ENCODE measurements at regions of chr12 and their contacts with region 1.

Region 1: DNA sequence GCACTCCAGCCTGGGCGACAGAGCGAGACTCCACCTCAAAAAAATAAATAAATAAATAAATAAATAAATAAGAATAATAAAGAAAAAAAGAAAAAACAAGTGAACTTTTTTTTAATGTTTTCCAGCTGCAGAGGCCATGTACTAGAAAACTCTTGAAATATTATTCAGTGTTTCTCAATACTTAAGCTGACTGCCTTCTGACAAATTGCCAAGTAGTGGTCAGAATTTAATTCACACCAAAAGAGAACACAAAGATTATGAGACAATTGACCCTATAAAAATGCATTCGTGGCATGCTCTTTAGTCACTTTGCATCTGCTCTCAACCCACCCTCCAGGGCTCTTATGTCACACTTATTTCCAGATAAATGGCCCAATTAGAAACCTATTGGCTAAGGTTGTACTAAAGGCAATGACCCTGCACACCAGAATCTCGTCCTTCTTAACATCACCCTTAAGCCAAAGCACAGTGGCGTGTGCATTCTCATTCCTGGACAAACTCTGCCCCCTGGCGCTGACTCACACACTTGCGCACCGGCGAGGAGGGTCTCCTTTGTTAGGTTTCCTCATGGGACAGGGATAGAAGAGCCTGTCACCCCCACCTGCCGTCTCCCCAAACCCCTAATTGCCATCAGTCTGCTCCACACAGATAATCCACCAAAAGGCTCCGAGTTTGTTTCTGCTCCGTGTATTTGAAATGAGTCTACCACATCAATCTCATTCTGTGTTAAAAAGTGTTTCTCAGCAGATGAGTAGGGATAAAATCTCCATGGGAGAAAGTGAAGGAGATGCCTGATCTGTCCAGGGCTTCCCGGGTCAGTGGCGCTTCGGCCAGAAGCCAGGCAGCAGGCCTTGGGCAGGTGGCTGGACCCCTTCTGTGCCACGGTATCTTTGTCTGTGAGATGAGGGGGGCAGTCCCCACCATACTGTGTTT is 73.1 kb upstream of the CEP83 start:
- DNase-seq: peak; percentile 82
- ATAC-seq: peak; percentile 75

Region 2: DNA sequence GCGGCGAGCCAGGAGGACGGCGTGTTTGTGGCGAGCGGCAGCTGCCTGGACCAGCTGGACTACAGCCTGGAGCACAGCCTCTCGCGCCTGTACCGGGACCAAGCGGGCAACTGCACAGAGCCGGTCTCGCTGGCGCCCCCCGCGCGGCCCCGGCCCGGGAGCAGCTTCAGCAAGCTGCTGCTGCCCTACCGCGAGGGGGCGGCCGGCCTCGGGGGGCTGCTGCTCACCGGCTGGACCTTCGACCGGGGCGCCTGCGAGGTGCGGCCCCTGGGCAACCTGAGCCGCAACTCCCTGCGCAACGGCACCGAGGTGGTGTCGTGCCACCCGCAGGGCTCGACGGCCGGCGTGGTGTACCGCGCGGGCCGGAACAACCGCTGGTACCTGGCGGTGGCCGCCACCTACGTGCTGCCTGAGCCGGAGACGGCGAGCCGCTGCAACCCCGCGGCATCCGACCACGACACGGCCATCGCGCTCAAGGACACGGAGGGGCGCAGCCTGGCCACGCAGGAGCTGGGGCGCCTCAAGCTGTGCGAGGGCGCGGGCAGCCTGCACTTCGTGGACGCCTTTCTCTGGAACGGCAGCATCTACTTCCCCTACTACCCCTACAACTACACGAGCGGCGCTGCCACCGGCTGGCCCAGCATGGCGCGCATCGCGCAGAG is 383.5 kb before region 1 on chr12:
- intact Hi-C with region 1: loop called (anchors 1 kb)
- DNase-seq: peak; percentile 84
- ATAC-seq: peak; percentile 37

Region 3: GRCh38 chr12:94326727-94327126 is 206.0 kb before region 1 on chr12:
- intact Hi-C with region 1: loop called (anchors 5 kb)
- DNase-seq: no peak
- ATAC-seq: no peak

Region 4: DNA sequence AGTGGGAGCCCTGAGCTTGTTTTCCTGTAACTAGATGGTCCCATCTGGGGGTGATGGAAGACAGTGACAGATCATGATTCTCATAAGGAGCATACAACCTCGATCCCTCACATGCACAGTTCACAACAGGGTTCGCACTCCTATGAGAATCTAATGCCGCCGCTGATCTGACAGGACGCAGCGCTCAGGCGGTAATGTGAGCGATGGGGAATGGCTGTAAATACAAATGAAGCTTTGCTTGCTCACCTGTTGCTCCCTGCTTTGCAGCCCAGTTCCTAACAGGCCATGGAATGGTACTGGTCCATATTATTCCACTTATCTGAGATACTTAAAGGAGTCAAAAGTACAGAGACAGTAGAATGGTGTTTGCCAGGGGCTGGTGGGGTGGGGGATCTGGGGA is 63.2 kb before region 1 on chr12:
- intact Hi-C with region 1: no loop called
- DNase-seq: no peak
- ATAC-seq: no peak

Region 5: GRCh38 chr12:94488463-94488862 is 44.3 kb before region 1 on chr12:
- intact Hi-C with region 1: no loop called
- DNase-seq: no peak
- ATAC-seq: no peak

Region 6: GRCh38 chr12:94560431-94561221 is 27.9 kb after region 1 on chr12:
- intact Hi-C with region 1: no loop called
- DNase-seq: no peak
- ATAC-seq: no peak

Measured in Right ventricle myocardium inferior (tissue), 1 donor.